ENCODE measurements at regions of chr3 and their contacts with region 1.

Region 1: GRCh38 chr3:101573449-101574387 is at the start of gene PCNP:
- DNase-seq: peak; percentile 98 to 100 (median 99)

Region 2: DNA sequence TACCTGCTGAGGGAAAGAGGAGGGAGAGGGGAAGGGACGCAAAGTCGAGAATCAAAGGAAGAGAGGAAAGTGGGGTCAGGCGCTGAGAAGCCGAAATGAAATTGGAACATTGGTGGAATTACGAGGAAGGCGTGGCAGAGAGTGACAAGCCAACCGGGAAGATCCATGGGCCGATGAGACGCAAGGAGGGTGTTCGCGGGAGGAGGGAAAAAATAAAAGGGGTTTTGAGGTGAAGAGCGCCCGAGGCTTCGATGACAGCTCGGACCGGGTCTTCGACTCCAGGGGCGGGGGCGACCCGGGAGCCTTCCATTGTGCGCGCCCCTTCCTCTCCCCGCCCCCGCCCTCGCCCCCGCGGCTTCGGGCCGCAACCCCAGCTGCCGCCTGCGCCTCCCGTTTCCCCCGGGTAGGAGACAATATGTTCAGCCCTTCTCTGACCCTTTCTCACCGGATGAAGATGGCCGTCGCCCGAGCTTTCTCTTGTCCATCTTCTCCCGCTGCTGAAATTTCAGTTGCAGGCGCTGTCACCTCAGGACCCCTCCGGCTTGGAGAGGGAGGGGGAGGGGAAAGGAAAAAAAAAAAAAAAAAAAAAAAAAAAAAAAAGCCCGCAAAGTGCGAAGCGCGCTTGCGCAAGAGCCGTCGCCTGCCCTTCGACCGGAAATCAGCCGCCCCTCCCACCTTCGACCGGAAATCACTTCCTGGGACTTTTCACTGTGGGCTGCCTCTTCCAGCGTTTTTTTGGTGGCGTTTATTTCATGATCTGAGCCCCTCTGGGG is 60.9 kb before region 1 on chr3 and contains the start of gene SENP7:
- intact Hi-C with region 1: loop called (anchors 5 kb)
- DNase-seq: peak; percentile 68 to 92 (median 82)

Region 3: DNA sequence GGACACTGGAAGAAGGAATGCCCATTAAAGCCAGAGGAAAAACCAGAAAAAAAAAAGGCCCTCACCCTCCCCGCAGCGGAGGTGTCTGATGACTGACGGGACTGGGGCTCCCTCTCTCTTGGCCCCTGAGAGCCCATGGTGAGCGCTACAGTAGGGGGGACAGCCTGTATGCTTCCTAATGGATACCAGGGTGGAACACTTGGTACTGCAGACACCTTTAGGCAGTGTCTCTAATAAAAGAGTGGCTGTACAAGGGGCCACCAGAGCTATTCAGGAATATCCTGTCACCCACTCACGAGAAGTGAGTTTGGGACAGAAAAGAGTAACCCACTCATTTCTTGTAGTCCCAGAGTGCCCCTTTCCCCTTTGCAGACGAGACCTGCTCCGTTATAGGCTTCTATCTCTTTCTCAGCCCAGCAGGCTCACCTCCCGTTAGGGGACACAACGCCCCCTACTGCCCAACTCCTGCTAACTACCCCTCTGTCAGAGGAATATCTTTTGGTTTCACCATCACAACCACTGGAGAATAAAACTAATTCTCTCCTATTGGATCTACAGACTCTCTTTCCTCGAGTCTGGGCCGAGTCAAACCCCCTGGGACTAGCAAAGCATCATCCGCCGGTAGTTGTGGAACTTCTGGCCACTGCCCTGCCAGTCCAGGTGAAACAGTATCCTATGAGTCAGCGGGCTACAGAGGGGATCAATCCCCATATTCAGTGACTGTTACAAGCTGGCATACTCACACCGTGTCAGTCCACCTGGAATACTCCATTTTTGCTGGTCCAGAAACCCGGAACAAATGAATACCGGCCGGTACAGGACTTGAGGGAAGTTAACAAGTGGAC is 62.5 kb after region 1 on chr3:
- intact Hi-C with region 1: loop called (anchors 10 kb)
- DNase-seq: peak; percentile 25 to 83 (median 63)

Region 4: GRCh38 chr3:101685870-101686412 is 112.2 kb after region 1 on chr3:
- intact Hi-C with region 1: loop called (anchors 5 kb)
- DNase-seq: no peak

Region 5: GRCh38 chr3:101809178-101810021 is 235.7 kb after region 1 on chr3:
- intact Hi-C with region 1: no loop called
- DNase-seq: peak in 17 of 42 donors; percentile 3 to 78 (median 28)

Region 6: GRCh38 chr3:103134023-103134724 is 1560.5 kb after region 1 on chr3:
- intact Hi-C with region 1: no loop called
- DNase-seq: no peak